ENCODE measurements at regions of chrX and their contacts with region 1.

Region 1: GRCh38 chrX:131746474-131746968 is 202.6 kb downstream of the OR13H1 start:
- DNase-seq: peak; percentile 47 to 92
- ATAC-seq: peak; percentile 87 to 89
- H3K4me3 ChIP-seq: peak overlapping the region; percentile 87
- H3K27ac ChIP-seq: peak overlapping the region; percentile 97 to 99
- H3K4me1 ChIP-seq: peaks cover 5% of the 10 kb centered on the region; the same call in 1 of the 3 replicates
- CTCF ChIP-seq: peak; percentile 54
- EP300 ChIP-seq: no peak
- POLR2A ChIP-seq: no peak
- RAD21 ChIP-seq: peak; percentile 85 to 89

Region 2: GRCh38 chrX:131763674-131764073 is 17.2 kb after region 1 on chrX:
- CTCF ChIA-PET with region 1: interaction called, 10 read pairs
- POLR2A ChIA-PET with region 1: interaction called, 11 read pairs
- DNase-seq: peak; percentile 69 to 94
- ATAC-seq: peak; percentile 96 to 97
- H3K4me3 ChIP-seq: peak overlapping the region; percentile 40
- H3K27ac ChIP-seq: peak overlapping the region; percentile 69 to 88
- H3K4me1 ChIP-seq: peaks cover 6% of the 10 kb centered on the region; the same call in 2 of the 3 replicates
- CTCF ChIP-seq: peak; percentile 66
- EP300 ChIP-seq: no peak
- POLR2A ChIP-seq: no peak
- RAD21 ChIP-seq: peak; percentile 90 to 91

Region 3: GRCh38 chrX:131894987-131895386 is 148.5 kb after region 1 on chrX:
- CTCF ChIA-PET with region 1: no interaction called
- POLR2A ChIA-PET with region 1: no interaction called
- DNase-seq: no peak
- ATAC-seq: no peak
- H3K4me3 ChIP-seq: no peak overlapping the region
- H3K27ac ChIP-seq: no peak overlapping the region
- H3K4me1 ChIP-seq: no peaks in the 10 kb centered on the region
- CTCF ChIP-seq: no peak
- EP300 ChIP-seq: no peak
- POLR2A ChIP-seq: no peak
- RAD21 ChIP-seq: no peak

Measured in A549 (cell line).